ENCODE measurements at regions of chr5 and their contacts with region 1.

Region 1: GRCh38 chr5:38922199-38922598 is 76.4 kb downstream of the OSMR start:
- DNase-seq: peak; percentile 62 to 75
- H3K4me3 ChIP-seq: no peak overlapping the region
- H3K27ac ChIP-seq: no peak overlapping the region
- H3K4me1 ChIP-seq: no peaks in the 10 kb centered on the region
- H3K27me3 ChIP-seq: no peaks in the 10 kb centered on the region
- CTCF ChIP-seq: peak; percentile 98

Region 2: GRCh38 chr5:38265546-38266179 is 656.5 kb before region 1 on chr5:
- CTCF ChIA-PET with region 1: no interaction called
- POLR2A ChIA-PET with region 1: no interaction called
- intact Hi-C with region 1: loop called (anchors 5 kb)
- DNase-seq: peak in 1 of 2 experiments; percentile 70
- H3K4me3 ChIP-seq: no peak overlapping the region
- H3K27ac ChIP-seq: no peak overlapping the region
- H3K4me1 ChIP-seq: no peaks in the 10 kb centered on the region
- H3K27me3 ChIP-seq: peaks cover 56% of the 10 kb centered on the region
- CTCF ChIP-seq: peak; percentile 90

Region 3: GRCh38 chr5:38420691-38421390 is 501.4 kb before region 1 on chr5:
- CTCF ChIA-PET with region 1: interaction called, 8 read pairs
- POLR2A ChIA-PET with region 1: no interaction called
- intact Hi-C with region 1: loop called (anchors 1 kb)
- DNase-seq: peak; percentile 40 to 74
- H3K4me3 ChIP-seq: no peak overlapping the region
- H3K27ac ChIP-seq: no peak overlapping the region
- H3K4me1 ChIP-seq: no peaks in the 10 kb centered on the region
- H3K27me3 ChIP-seq: peaks cover 10% of the 10 kb centered on the region; the same call in 1 of the 2 replicates
- CTCF ChIP-seq: peak; percentile 81

Region 4: GRCh38 chr5:38666668-38667498 is 255.3 kb before region 1 on chr5:
- CTCF ChIA-PET with region 1: no interaction called
- POLR2A ChIA-PET with region 1: no interaction called
- intact Hi-C with region 1: loop called (anchors 2 kb)
- DNase-seq: peak in 1 of 2 experiments; percentile 52
- H3K4me3 ChIP-seq: no peak overlapping the region
- H3K27ac ChIP-seq: no peak overlapping the region
- H3K4me1 ChIP-seq: no peaks in the 10 kb centered on the region
- H3K27me3 ChIP-seq: no peaks in the 10 kb centered on the region
- CTCF ChIP-seq: peak; percentile 79

Region 5: DNA sequence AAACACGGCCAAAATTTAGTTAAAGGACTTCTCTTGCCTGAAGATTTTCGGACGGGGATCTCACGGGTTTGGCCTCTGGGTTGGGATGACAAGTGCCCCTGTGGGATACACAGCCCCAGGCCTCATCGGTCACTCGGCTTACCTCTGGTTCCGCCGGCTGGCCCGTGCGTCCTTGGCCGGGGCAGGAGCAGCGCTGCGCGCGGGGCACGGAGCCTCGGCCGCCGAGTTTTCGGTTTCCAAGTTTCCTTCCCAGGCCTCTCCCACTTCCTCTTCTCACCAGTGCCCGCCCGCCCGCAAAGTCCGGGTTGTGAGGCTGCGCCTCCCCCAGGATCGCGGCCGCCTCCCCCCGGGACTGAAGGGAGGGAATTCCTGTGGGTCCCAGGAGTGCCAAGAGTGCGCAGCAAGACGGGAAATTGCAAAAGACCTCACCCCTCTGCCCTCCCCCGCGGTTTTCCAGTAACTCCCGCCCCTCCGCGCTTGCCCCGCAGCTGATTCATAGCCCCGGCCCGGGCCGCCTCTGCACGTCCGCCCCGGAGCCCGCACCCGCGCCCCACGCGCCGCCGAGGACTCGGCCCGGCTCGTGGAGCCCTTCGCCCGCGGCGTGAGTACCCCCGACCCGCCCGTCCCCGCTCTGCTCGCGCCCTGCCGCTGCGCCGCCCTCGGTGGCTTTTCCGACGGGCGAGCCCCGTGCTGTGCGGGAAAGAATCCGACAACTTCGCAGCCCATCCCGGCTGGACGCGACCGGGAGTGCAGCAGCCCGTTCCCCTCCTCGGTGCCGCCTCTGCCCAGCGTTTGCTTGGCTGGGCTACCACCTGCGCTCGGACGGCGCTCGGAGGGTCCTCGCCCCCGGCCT is 76.4 kb before region 1 on chr5 and contains the start of gene OSMR:
- CTCF ChIA-PET with region 1: no interaction called
- POLR2A ChIA-PET with region 1: no interaction called
- intact Hi-C with region 1: loop called (anchors 1 kb)
- DNase-seq: peak; percentile 92 to 100
- H3K4me3 ChIP-seq: peak within 1 kb of the TSS; percentile 79
- H3K27ac ChIP-seq: peak within 1 kb of the TSS; percentile 95
- H3K4me1 ChIP-seq: peaks cover 48% of the 10 kb centered on the region
- H3K27me3 ChIP-seq: no peaks in the 10 kb centered on the region
- CTCF ChIP-seq: no peak
- total RNA-seq, gene OSMR: 45.3 and 65.4 TPM in 2 replicates

Region 6: GRCh38 chr5:39360471-39361111 is 438.4 kb after region 1 on chr5:
- CTCF ChIA-PET with region 1: no interaction called
- POLR2A ChIA-PET with region 1: no interaction called
- intact Hi-C with region 1: no loop called
- DNase-seq: peak in 1 of 2 experiments; percentile 65
- H3K4me3 ChIP-seq: no peak overlapping the region
- H3K27ac ChIP-seq: 0 out of 2 replicates have a peak overlapping the region, but pooled peaks have one; percentile 1
- H3K4me1 ChIP-seq: 0 out of 2 replicates have a peak, but pooled peaks cover 4% of the 10 kb centered on the region
- H3K27me3 ChIP-seq: no peaks in the 10 kb centered on the region
- CTCF ChIP-seq: no peak